Panc1 (cell line): ENCODE measurements at regions of chr14 and their contacts with region 1.

Region 1: DNA sequence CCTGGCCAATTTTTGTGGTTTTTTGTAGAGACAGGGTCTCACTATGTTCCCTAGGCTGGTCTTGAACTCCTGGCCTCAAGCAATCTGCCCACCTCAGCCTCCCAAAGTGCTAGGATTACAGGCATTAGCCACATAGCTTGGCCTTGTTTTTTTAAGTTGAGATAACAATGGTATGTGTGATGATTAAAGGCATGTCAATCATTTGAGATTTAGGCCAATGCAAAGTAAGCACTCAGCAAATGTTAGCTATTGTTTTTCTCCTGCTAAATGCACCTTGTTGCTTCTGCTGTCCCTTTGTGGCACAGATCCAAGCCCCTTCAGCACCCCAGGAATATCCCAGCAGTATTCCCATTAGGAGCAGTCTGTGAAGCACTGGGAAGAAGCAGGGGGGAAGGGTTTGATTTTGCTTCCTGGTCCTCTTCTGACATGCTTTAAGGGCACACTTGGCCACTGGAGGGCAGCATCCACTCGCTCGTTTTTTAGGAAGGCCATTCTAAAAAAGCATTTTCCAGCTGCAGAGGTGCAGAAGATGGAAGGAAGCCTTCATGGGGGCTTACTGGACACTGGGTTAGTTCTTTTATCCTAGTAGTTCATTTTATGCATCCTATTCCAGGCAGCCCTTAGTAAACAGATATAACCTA is 70.2 kb upstream of the ZFP36L1 start:
- DNase-seq: peak; percentile 48
- ATAC-seq: peak; percentile 83
- H3K4me3 ChIP-seq: no peak overlapping the region
- H3K27ac ChIP-seq: no peak overlapping the region
- H3K4me1 ChIP-seq: no peaks in the 10 kb centered on the region
- H3K27me3 ChIP-seq: no peaks in the 10 kb centered on the region
- CTCF ChIP-seq: peak; percentile 80

Region 2: DNA sequence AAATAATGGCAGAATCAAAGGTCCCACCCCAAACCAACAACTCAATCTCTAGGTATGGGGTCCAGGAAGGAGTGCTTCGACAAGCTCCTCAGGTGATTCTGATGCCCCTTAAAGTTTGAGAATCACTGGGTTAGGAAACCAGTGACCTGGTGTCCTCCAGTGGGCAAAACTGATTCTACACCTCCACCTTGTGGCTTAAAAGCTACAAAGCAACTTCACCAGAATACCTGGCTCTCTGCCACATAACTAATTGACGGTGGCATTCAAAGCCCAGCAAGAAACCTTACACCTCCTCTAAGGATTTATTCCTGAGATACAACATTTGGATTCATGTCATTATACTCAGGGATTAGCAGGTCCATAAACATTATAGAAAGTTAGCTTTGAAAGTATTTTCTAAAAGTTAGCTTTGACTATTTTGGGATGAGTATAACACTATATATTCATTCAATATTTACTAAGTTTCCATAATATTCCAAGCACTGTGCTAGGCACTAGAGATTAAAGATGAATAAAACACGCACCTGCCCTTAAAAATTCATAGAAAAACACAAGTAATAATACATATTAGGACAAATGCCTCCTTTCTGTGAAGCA is 244.4 kb after region 1 on chr14:
- CTCF ChIA-PET with region 1: interaction called, 7 read pairs
- POLR2A ChIA-PET with region 1: no interaction called
- in situ Hi-C with region 1: no loop called
- intact Hi-C with region 1: loop called (anchors 5 kb)
- DNase-seq: peak; percentile 48
- ATAC-seq: peak; percentile 78
- H3K4me3 ChIP-seq: no peak overlapping the region
- H3K27ac ChIP-seq: no peak overlapping the region
- H3K4me1 ChIP-seq: no peaks in the 10 kb centered on the region; the same call in 1 of the 2 replicates
- H3K27me3 ChIP-seq: no peaks in the 10 kb centered on the region
- CTCF ChIP-seq: peak; percentile 73